ENCODE measurements at regions of chr11 and their contacts with region 1.

Region 1: DNA sequence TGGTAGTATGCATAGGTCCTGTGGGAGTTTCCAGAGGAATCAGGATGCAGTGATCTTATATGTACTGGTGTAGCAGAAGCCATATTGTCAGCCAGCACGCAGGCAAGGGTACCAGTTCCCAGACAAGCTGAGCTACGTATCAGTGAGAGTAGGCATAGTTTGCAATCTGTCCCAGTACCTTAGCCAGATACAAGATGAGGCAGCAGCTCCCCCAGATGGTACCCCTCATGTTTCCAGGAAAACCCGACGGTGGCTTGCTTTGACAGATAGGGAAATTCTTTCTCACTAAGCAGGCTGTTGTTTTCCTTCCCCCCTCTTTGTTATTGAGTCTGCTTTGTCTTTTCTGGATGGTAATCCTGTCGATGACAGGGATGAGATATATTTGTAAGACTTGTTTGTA is 109.7 kb upstream of the RRM1 start:
- DNase-seq: peak; percentile 79
- ATAC-seq: peak; percentile 83
- H3K4me3 Mint-ChIP-seq: no peak overlapping the region
- H3K27ac Mint-ChIP-seq: peak overlapping the region; percentile 77
- H3K4me1 Mint-ChIP-seq: peaks cover 79% of the 10 kb centered on the region
- H3K27me3 Mint-ChIP-seq: no peaks in the 10 kb centered on the region
- CTCF ChIP-seq: peak; percentile 31

Region 2: GRCh38 chr11:3934658-3935057 is 50.2 kb before region 1 on chr11:
- CTCF ChIA-PET with region 1: no interaction called
- POLR2A ChIA-PET with region 1: no interaction called
- intact Hi-C with region 1: no loop called
- DNase-seq: no peak
- ATAC-seq: no peak
- H3K4me3 Mint-ChIP-seq: no peak overlapping the region
- H3K27ac Mint-ChIP-seq: peak overlapping the region; percentile 60
- H3K4me1 Mint-ChIP-seq: peaks cover 60% of the 10 kb centered on the region
- H3K27me3 Mint-ChIP-seq: no peaks in the 10 kb centered on the region
- CTCF ChIP-seq: no peak

Region 3: GRCh38 chr11:3947061-3947460 is 37.8 kb before region 1 on chr11:
- CTCF ChIA-PET with region 1: no interaction called
- POLR2A ChIA-PET with region 1: no interaction called
- intact Hi-C with region 1: loop called (anchors 5 kb)
- DNase-seq: peak; percentile 70
- ATAC-seq: peak; percentile 75
- H3K4me3 Mint-ChIP-seq: peak overlapping the region; percentile 37
- H3K27ac Mint-ChIP-seq: peak overlapping the region; percentile 93
- H3K4me1 Mint-ChIP-seq: peaks cover 93% of the 10 kb centered on the region
- H3K27me3 Mint-ChIP-seq: no peaks in the 10 kb centered on the region
- CTCF ChIP-seq: no peak

Region 4: DNA sequence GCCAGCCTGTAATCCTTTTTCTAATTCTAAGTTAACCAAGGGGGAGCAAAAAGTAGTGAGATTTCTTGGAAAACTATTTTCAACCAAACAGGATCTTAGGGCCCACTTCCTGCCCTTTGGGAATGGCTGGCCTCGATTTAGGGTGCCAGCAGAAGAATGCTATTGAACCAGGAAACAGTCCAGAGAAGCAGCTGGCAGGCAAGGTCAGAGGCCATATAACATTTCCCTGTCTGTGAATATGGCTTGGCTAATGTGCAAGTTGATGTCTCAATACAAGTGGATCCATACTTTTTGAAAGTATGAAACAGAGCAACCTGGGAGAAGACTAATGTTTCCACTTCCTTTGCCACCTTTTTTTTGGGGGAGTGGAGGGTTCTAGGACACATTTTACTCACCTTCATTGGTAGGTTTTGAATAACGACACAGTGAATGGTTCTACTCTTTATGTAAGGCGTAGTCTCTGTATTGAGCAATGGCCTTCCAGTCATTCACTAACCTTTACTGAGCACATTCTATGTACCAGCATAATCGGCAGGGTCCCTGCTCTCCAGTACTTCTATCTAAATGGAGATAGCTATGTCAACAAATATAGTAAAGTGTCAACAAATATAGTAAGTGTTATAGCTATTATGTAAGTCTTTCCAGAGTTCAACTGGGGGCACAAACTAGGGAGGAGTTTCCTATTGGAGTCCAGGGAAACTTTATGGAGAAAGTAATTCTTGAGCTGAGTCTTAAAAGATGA is 75.5 kb after region 1 on chr11:
- CTCF ChIA-PET with region 1: no interaction called
- POLR2A ChIA-PET with region 1: no interaction called
- intact Hi-C with region 1: loop called (anchors 5 kb)
- DNase-seq: no peak
- ATAC-seq: no peak
- H3K4me3 Mint-ChIP-seq: no peak overlapping the region
- H3K27ac Mint-ChIP-seq: no peak overlapping the region
- H3K4me1 Mint-ChIP-seq: peaks cover 44% of the 10 kb centered on the region
- H3K27me3 Mint-ChIP-seq: no peaks in the 10 kb centered on the region
- CTCF ChIP-seq: no peak